Breast epithelium (tissue), 4 donors: ENCODE measurements at regions of chr1 and their contacts with region 1.

Region 1: DNA sequence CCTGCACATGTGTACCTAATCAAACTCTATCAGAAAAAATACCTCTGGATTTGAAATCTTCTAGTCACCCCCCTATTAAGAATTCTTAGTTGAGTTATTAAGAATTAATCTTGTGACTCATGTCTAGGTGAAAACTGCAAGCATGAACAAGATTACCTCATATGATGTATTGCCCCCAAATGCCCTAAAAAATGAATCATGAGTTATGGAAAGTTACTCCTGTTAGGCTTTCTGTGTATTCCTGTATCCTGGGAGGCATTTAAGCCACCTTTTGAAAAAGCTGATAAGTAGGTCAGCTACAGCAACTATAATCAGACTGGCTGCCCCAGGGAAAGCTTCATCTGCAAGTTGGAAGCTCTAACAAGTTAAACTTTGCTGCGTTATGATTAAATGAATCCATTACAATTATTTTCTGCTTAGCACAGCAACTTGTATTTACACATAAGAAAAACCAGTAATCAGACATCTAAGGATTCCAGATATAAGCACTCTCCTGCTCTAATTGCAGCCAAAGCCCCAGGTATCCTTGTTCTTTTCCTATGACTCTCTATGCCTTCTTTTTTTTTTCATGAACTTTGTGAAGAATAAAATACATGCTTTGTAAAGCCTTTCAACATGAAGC is 147.7 kb downstream of the NTPCR start:
- DNase-seq: no peak
- H3K4me3 ChIP-seq: no peak overlapping the region
- H3K27ac ChIP-seq: no peak overlapping the region
- H3K4me1 ChIP-seq: no peaks in the 10 kb centered on the region
- H3K27me3 ChIP-seq: no peaks in the 10 kb centered on the region
- CTCF ChIP-seq: no peak
- POLR2A ChIP-seq: no peak

Region 2: DNA sequence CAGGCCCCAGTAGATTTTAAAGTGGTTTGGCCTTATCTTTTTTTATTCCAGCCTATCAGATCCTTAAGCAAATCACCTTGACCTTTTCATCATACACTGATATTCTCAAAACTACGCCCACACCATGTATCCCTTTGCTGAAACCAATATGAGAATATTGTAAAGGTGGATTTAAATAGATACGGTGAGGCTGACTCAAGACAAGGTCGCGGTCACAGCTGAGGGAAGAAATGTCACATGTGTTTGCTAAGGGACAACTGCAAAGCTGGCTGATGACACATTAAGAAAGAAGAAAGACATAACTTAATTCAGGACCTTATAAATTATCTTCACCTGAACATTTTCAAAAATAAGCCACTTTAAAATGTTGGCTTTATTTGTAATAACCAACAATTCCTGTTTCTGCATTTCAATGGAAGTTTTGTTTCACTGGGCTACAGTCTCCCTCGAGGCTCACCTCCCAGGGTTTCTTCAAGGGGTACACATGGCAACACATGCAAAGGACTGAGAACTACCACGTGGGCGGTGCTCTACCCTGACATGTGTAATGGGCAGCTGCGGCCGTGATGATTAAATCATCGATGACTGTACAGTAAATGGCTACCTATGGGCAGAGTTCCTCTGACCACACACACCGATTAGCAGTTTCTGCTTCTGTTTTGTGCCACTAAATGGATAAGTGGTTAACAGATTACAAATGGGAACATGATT is 657.6 kb before region 1 on chr1:
- intact Hi-C with region 1: no loop called
- DNase-seq: no peak
- H3K4me3 ChIP-seq: no peak overlapping the region
- H3K27ac ChIP-seq: no peak overlapping the region
- H3K4me1 ChIP-seq: no peaks in the 10 kb centered on the region
- H3K27me3 ChIP-seq: no peaks in the 10 kb centered on the region
- CTCF ChIP-seq: no peak
- POLR2A ChIP-seq: no peak

Region 3: GRCh38 chr1:233045588-233045987 is 52.5 kb before region 1 on chr1:
- intact Hi-C with region 1: loop called (anchors 2 kb)
- DNase-seq: no peak
- H3K4me3 ChIP-seq: no peak overlapping the region
- H3K27ac ChIP-seq: no peak overlapping the region
- H3K4me1 ChIP-seq: no peaks in the 10 kb centered on the region
- H3K27me3 ChIP-seq: no peaks in the 10 kb centered on the region
- CTCF ChIP-seq: no peak
- POLR2A ChIP-seq: no peak

Region 4: GRCh38 chr1:233172227-233172626 is 74.2 kb after region 1 on chr1:
- intact Hi-C with region 1: no loop called
- DNase-seq: no peak
- H3K4me3 ChIP-seq: no peak overlapping the region
- H3K27ac ChIP-seq: no peak overlapping the region
- H3K4me1 ChIP-seq: no peaks in the 10 kb centered on the region
- H3K27me3 ChIP-seq: no peaks in the 10 kb centered on the region
- CTCF ChIP-seq: no peak
- POLR2A ChIP-seq: no peak